GM12878 (cell line): ENCODE measurements at regions of chr7 and their contacts with region 1.

Region 1: GRCh38 chr7:121994625-121995410 is 121.9 kb downstream of the PTPRZ1 start:
- DNase-seq: no peak
- ATAC-seq: peak; percentile 98
- H3K4me3 ChIP-seq: no peak overlapping the region
- H3K27ac ChIP-seq: no peak overlapping the region
- H3K4me1 ChIP-seq: no peaks in the 10 kb centered on the region
- H3K27me3 ChIP-seq: no peaks in the 10 kb centered on the region
- CTCF ChIP-seq: peak; percentile 69 to 84 (median 73)
- EP300 ChIP-seq: no peak
- POLR2A ChIP-seq: no peak
- RAD21 ChIP-seq: peak; percentile 88

Region 2: GRCh38 chr7:121126801-121127534 is 867.9 kb before region 1 on chr7:
- CTCF ChIA-PET with region 1: interaction called, 27 read pairs
- POLR2A ChIA-PET with region 1: no interaction called
- RAD21 ChIA-PET with region 1: interaction called, 8 read pairs
- SMC1A ChIA-PET with region 1: interaction called, 7 read pairs
- in situ Hi-C with region 1: loop called (anchors 25 kb)
- intact Hi-C with region 1: loop called (anchors 5 kb)
- DNase-seq: no peak
- ATAC-seq: no peak
- H3K4me3 ChIP-seq: no peak overlapping the region
- H3K27ac ChIP-seq: no peak overlapping the region
- H3K4me1 ChIP-seq: no peaks in the 10 kb centered on the region
- H3K27me3 ChIP-seq: no peaks in the 10 kb centered on the region
- CTCF ChIP-seq: peak in 2 of 3 experiments; percentile 5 to 24; a peak in 1 of 6 replicates
- EP300 ChIP-seq: no peak
- POLR2A ChIP-seq: no peak
- RAD21 ChIP-seq: peak; percentile 54

Region 3: DNA sequence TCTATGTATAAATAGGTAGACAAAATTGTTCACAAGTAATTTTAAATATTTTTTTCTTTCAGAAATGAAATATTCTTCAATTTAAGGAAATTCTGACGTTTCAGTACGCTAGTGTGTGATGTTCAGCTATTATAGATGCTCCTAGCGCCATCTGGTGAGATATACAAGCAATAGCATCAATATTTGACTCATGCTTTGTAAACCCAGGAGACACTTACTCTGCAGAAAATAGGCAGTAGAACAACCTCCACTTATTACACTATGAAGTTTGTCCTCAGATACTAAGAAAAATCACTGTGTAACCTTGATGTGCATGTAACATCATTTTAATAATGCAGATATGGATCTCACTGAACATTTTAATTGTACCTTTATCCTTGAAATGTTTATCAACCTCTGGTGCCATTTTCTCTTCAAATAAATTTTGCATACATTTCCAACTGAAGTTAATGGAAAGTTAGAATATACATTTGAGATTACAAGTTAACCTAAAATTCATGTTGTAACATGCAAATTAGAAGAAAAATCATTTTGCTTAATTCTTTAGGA is 447.2 kb before region 1 on chr7:
- CTCF ChIA-PET with region 1: interaction called, 9 read pairs
- POLR2A ChIA-PET with region 1: no interaction called
- RAD21 ChIA-PET with region 1: interaction called, 8 read pairs
- SMC1A ChIA-PET with region 1: interaction called, 13 read pairs
- in situ Hi-C with region 1: no loop called
- intact Hi-C with region 1: loop called (anchors 2 kb)
- DNase-seq: no peak
- ATAC-seq: peak; percentile 89
- H3K4me3 ChIP-seq: no peak overlapping the region
- H3K27ac ChIP-seq: no peak overlapping the region
- H3K4me1 ChIP-seq: no peaks in the 10 kb centered on the region
- H3K27me3 ChIP-seq: no peaks in the 10 kb centered on the region
- CTCF ChIP-seq: peak; percentile 60 to 85 (median 64); a peak in 5 of 6 replicates
- EP300 ChIP-seq: no peak
- POLR2A ChIP-seq: no peak
- RAD21 ChIP-seq: peak; percentile 98

Region 4: GRCh38 chr7:121744877-121745276 is 249.9 kb before region 1 on chr7:
- CTCF ChIA-PET with region 1: interaction called, 26 read pairs
- POLR2A ChIA-PET with region 1: no interaction called
- RAD21 ChIA-PET with region 1: interaction called, 4 read pairs
- SMC1A ChIA-PET with region 1: interaction called, 26 read pairs
- in situ Hi-C with region 1: loop called (anchors 5 kb)
- intact Hi-C with region 1: no loop called
- DNase-seq: no peak
- ATAC-seq: no peak
- H3K4me3 ChIP-seq: no peak overlapping the region
- H3K27ac ChIP-seq: no peak overlapping the region
- H3K4me1 ChIP-seq: no peaks in the 10 kb centered on the region
- H3K27me3 ChIP-seq: no peaks in the 10 kb centered on the region
- CTCF ChIP-seq: no peak
- EP300 ChIP-seq: no peak
- POLR2A ChIP-seq: no peak
- RAD21 ChIP-seq: no peak

Region 5: GRCh38 chr7:121777672-121778071 is 217.1 kb before region 1 on chr7:
- CTCF ChIA-PET with region 1: interaction called, 11 read pairs
- POLR2A ChIA-PET with region 1: no interaction called
- RAD21 ChIA-PET with region 1: interaction called, 6 read pairs
- SMC1A ChIA-PET with region 1: interaction called, 3 read pairs
- in situ Hi-C with region 1: no loop called
- intact Hi-C with region 1: no loop called
- DNase-seq: no peak
- ATAC-seq: no peak
- H3K4me3 ChIP-seq: no peak overlapping the region
- H3K27ac ChIP-seq: no peak overlapping the region
- H3K4me1 ChIP-seq: no peaks in the 10 kb centered on the region
- H3K27me3 ChIP-seq: no peaks in the 10 kb centered on the region
- CTCF ChIP-seq: no peak
- EP300 ChIP-seq: no peak
- POLR2A ChIP-seq: no peak
- RAD21 ChIP-seq: no peak

Region 6: GRCh38 chr7:121966935-121967332 is 27.9 kb before region 1 on chr7:
- CTCF ChIA-PET with region 1: interaction called, 16 read pairs
- POLR2A ChIA-PET with region 1: no interaction called
- RAD21 ChIA-PET with region 1: interaction called, 3 read pairs
- SMC1A ChIA-PET with region 1: interaction called, 3 read pairs
- in situ Hi-C with region 1: no loop called
- intact Hi-C with region 1: no loop called
- DNase-seq: no peak
- ATAC-seq: no peak
- H3K4me3 ChIP-seq: no peak overlapping the region
- H3K27ac ChIP-seq: no peak overlapping the region
- H3K4me1 ChIP-seq: no peaks in the 10 kb centered on the region
- H3K27me3 ChIP-seq: no peaks in the 10 kb centered on the region
- CTCF ChIP-seq: no peak
- EP300 ChIP-seq: no peak
- POLR2A ChIP-seq: no peak
- RAD21 ChIP-seq: no peak